ENCODE measurements at regions of chr6 and their contacts with region 1.

Region 1: GRCh38 chr6:135054569-135055498 is at the start of gene HBS1L:
- DNase-seq: peak; percentile 90 to 98 (median 96)
- ATAC-seq: peak; percentile 97 to 98
- H3K4me3 Mint-ChIP-seq: peak within 1 kb of the TSS; percentile 90 to 100 (median 98)
- H3K27ac Mint-ChIP-seq: peak within 1 kb of the TSS; percentile 95 to 100 (median 99)
- H3K4me1 Mint-ChIP-seq: peaks cover 24 to 44% (median 38%) of the 10 kb centered on the region in 4 donors
- H3K27me3 Mint-ChIP-seq: no peaks in the 10 kb centered on the region
- polyA plus RNA-seq, gene HBS1L: 71.1 to 78.2 (median 71.9) TPM

Region 2: DNA sequence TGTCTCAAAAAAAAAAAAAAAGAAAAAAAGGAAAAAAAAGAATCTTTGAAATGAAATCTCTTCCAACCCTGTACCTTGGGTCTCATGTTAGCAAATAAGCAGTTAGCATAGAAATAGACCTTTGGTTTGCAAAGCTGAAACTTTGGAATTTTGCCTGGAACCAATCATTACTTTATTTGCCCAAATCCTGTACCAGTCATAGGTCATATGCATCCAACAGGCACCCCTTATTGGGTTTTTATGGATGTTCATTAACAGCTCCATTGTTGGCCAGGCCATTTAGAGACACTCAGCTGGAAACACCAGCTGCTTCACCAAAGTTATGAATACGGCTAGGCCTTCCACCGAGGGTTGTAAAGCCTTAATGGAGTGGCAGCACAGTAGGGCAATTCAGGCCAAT is 157.9 kb before region 1 on chr6:
- POLR2A ChIA-PET with region 1: no interaction called
- DNase-seq: no peak
- ATAC-seq: no peak
- H3K4me3 Mint-ChIP-seq: no peak overlapping the region
- H3K27ac Mint-ChIP-seq: no peak overlapping the region
- H3K4me1 Mint-ChIP-seq: no peaks in the 10 kb centered on the region
- H3K27me3 Mint-ChIP-seq: peaks cover 0 to 15% (median 4%) of the 10 kb centered on the region in 5 donors

Region 3: DNA sequence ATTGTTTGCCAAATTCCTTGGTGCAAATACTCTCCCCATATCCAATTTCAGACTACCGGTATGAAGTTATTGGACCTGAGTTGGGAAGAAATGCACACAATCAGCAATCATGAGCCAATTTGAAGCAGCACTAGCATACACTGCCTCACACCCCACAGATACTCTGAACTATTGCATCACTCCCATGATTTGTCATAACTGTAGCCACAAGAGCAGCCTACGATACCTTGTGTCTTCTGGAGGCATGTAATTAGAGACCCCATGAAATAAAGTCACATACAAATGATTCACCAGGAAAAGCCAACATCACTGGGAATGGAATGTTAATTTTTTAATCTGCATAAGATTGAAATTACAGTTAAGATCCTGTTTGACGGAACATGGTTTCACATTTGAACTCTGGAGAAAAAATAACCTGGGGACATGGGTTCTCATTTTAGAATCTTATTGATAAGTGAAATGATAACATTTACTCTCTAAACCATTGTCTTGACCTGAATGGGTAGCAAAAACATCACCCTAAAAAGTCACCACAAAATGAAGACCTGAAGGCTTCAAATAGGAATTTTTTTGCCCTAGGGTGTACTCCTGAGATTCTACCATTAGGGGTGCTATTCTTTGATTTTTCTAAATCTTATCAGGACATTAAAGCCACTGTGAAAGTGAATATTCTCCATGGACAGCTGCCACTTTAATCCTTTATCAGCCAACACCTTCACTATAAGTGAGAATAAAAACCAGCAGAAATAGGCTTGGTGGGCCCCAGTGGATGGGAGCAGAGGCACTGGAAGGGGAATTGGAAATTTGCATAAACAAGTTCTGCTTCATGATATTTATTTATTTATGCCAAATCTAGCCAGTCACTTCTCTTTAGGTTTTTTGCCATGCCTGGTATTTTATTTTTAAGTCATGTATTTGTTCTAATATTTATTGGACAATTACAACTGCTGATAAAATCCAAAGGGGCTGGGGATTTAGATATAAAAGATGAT is 34.3 kb after region 1 on chr6:
- POLR2A ChIA-PET with region 1: interaction called, 48 read pairs
- DNase-seq: peak in 1 of 10 donors; percentile 21
- ATAC-seq: peak; percentile 25 to 34
- H3K4me3 Mint-ChIP-seq: peak overlapping the region; percentile 42 to 80 (median 51)
- H3K27ac Mint-ChIP-seq: peak overlapping the region; percentile 39 to 98 (median 94)
- H3K4me1 Mint-ChIP-seq: peaks cover 36 to 92% (median 81%) of the 10 kb centered on the region in 4 donors
- H3K27me3 Mint-ChIP-seq: no peaks in the 10 kb centered on the region

Region 4: DNA sequence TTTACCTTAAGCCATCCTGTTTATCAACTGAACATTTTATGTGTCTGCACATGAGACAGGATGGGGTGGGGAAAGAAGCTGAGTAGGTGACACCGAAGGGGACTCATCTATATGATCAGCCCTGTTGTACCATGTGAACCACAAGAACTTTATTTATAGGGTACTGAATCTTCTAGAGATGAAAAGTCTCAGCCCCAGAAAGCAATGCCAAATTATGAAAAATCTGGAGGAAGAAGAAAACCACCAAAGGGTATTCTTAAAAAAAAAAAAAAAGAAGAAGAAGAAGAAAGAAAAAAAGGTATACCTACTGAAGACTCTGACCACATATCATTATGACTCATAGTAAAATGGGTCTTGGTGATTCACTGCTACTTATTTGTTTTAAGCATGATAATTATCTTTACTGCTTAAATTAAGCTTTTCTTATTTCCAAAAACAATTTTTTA is 39.6 kb after region 1 on chr6:
- POLR2A ChIA-PET with region 1: interaction called, 15 read pairs
- DNase-seq: peak; percentile 6 to 83 (median 48)
- ATAC-seq: peak; percentile 94 to 96
- H3K4me3 Mint-ChIP-seq: peak overlapping the region in 9 of 10 donors; percentile 27 to 77 (median 61)
- H3K27ac Mint-ChIP-seq: peak overlapping the region; percentile 81 to 98 (median 90)
- H3K4me1 Mint-ChIP-seq: peaks cover 19 to 70% (median 56%) of the 10 kb centered on the region in 4 donors
- H3K27me3 Mint-ChIP-seq: no peaks in the 10 kb centered on the region

Region 5: GRCh38 chr6:135105710-135106109 is 50.9 kb after region 1 on chr6:
- POLR2A ChIA-PET with region 1: interaction called, 24 read pairs
- DNase-seq: no peak
- ATAC-seq: no peak
- H3K4me3 Mint-ChIP-seq: peak overlapping the region in 1 of 10 donors; percentile 47
- H3K27ac Mint-ChIP-seq: peak overlapping the region in 9 of 10 donors; percentile 50 to 95 (median 88)
- H3K4me1 Mint-ChIP-seq: peaks cover 32 to 76% (median 59%) of the 10 kb centered on the region in 4 donors
- H3K27me3 Mint-ChIP-seq: no peaks in the 10 kb centered on the region

Region 6: GRCh38 chr6:135145063-135145800 is 90.4 kb after region 1 on chr6:
- POLR2A ChIA-PET with region 1: interaction called, 16 read pairs
- DNase-seq: peak in 5 of 10 donors; percentile 19 to 58 (median 53)
- ATAC-seq: peak; percentile 42 to 61
- H3K4me3 Mint-ChIP-seq: peak overlapping the region in 5 of 10 donors; percentile 2 to 69 (median 26)
- H3K27ac Mint-ChIP-seq: peak overlapping the region in 9 of 10 donors; percentile 0 to 87 (median 54)
- H3K4me1 Mint-ChIP-seq: peaks cover 13 to 52% (median 50%) of the 10 kb centered on the region in 4 donors
- H3K27me3 Mint-ChIP-seq: no peaks in the 10 kb centered on the region